ENCODE measurements at regions of chr9 and their contacts with region 1.

Region 1: DNA sequence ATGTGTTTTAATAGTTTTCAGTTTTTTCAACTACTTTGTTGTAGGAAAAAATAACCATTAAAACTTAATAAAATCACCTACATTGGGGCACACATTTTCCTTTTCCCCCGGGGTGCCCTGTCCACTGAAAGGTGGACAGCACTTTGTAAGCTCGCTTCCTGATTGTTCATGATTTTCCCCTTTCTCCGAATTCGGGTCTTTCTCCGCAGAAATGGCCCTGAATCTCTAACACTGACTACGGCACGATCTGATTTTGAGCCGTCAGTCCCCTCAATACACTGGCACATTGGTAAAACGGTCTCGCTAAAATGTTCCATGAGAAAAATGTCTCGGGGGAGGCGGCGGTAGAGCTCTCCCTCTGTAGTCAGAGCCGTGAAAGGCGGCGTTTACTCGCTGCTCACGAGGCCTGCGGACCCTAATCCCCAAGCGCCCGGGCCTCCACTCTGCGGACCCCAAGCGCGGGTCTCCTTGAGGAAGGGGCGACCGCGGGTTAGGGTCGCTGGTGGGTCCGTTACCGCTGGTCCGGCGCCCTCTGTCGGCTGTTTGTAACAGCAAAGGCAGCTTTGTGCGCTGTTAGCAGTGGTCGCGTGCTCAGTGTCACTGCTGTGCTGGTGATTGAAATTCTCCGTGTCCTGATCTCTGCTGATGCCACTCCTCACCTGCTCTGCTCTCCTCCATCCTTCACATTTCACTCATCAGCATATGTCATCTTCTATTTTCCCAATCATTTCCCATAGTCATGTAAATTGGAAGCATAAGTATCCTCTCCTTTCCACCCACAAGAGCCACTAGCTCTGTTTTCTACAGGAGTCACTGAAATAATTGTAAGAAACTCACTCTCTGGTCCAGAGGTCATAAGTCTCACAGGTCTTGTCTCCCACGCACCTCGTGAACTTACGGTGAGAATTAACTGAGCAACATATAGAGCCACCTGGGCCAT is 10.8 kb upstream of the IFNA2 start:
- DNase-seq: peak; percentile 21
- ATAC-seq: peak; percentile 84
- H3K4me3 ChIP-seq: peak overlapping the region; percentile 63 to 67
- H3K27ac ChIP-seq: no peak overlapping the region
- H3K4me1 ChIP-seq: peaks cover 0 to 7% of the 10 kb centered on the region in 2 experiments; a peak in 1 of 4 replicates
- H3K27me3 ChIP-seq: no peaks in the 10 kb centered on the region
- CTCF ChIP-seq: peak; percentile 76 to 94 (median 92)
- POLR2A ChIP-seq: no peak
- RAD21 ChIP-seq: peak; percentile 50

Region 2: GRCh38 chr9:21317956-21318923 is 77.8 kb before region 1 on chr9:
- CTCF ChIA-PET with region 1: interaction called, 12 read pairs
- POLR2A ChIA-PET with region 1: no interaction called
- RAD21 ChIA-PET with region 1: no interaction called
- intact Hi-C with region 1: no loop called
- DNase-seq: no peak
- ATAC-seq: peak; percentile 89
- H3K4me3 ChIP-seq: no peak overlapping the region
- H3K27ac ChIP-seq: no peak overlapping the region
- H3K4me1 ChIP-seq: peaks cover 3 to 10% of the 10 kb centered on the region in 2 experiments; a peak in 3 of 4 replicates
- H3K27me3 ChIP-seq: no peaks in the 10 kb centered on the region
- CTCF ChIP-seq: peak; percentile 54 to 68 (median 63); a peak in 5 of 6 replicates
- POLR2A ChIP-seq: no peak
- RAD21 ChIP-seq: peak; percentile 69

Region 3: DNA sequence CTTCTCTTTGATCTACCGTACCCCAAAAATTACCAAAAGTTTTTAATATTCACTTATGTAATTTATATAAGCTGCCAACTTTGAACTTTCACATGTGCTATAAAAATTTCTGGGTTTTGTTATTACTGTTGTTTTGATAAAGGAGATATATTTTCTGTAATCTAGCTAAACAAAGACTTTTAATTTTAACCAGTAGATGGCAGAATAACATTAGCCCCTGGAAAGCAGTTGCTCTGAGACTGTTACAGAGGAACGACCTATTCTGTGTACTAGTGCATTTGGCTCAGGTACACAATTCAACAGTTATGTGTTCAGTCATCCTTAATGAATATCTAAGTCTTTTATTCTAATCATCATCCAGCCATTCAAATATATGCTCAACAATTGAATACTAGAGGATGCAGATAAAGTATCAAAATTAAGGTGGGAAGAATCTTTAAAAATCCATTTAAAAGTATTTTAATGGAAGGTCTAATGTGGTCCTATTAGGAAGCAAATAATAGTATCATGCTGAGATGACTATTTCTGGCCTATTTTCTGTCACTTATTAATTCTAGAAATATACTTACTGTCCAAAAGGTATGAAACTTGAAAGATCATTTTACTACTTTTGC is 69.4 kb before region 1 on chr9:
- CTCF ChIA-PET with region 1: interaction called, 22 read pairs
- POLR2A ChIA-PET with region 1: no interaction called
- RAD21 ChIA-PET with region 1: interaction called in 1 of 2 experiments, 3 read pairs
- intact Hi-C with region 1: loop called (anchors 2 kb)
- DNase-seq: no peak
- ATAC-seq: peak; percentile 80
- H3K4me3 ChIP-seq: no peak overlapping the region
- H3K27ac ChIP-seq: no peak overlapping the region
- H3K4me1 ChIP-seq: no peaks in the 10 kb centered on the region
- H3K27me3 ChIP-seq: no peaks in the 10 kb centered on the region
- CTCF ChIP-seq: peak; percentile 51 to 81 (median 69); a peak in 5 of 6 replicates
- POLR2A ChIP-seq: no peak
- RAD21 ChIP-seq: peak; percentile 79

Region 4: DNA sequence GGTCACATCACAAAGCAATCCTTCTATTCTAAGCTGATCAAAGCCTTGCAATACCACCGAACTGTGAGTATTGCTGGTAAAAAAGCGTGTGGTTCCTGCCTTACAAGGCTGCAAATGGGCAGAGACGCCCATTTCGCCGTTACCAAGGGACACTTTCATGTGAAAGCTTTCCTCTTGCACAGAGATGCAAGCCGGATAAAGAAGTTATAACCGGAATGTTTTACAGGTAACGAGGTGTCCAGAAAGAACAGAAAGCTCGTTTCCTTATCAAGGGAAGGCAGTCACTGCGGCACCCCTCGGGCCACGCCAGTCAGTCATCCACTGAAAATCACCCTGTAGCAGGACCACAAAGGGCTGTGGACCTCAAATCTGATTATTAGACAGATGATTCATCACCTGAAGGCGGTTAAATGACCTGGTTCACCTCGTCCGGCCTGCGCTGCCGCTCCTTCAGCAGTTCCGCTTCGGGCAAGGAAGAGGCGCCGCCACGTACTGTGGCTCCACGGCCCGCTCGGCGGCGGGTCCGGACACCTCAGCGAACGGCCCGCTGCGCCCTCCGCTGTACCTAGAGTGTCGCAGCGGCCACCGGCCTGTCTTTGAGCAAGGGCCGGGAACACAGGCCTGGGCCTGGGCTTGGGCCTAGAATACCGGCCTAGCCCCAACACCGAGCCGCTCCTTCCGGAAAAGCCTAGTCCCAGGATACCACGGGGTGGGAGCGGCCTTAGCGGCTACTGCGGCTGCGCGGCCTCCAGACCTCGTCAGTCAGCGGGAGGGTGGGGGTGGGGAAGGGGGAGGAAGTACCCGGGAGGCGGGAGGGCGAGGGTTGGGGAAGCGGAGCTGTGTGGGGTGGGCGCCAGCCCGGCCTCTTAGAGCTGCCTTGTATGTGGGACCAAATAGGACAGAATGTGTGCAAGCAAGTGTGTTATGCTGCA is 61.1 kb before region 1 on chr9 and contains the start of gene KLHL9:
- CTCF ChIA-PET with region 1: interaction called, 14 read pairs
- POLR2A ChIA-PET with region 1: no interaction called
- RAD21 ChIA-PET with region 1: no interaction called
- intact Hi-C with region 1: no loop called
- DNase-seq: peak; percentile 83
- ATAC-seq: peak; percentile 96
- H3K4me3 ChIP-seq: peak within 1 kb of the TSS; percentile 85 to 98
- H3K27ac ChIP-seq: peak within 1 kb of the TSS; percentile 82
- H3K4me1 ChIP-seq: peaks cover 3 to 23% of the 10 kb centered on the region in 2 experiments; a peak in 3 of 4 replicates
- H3K27me3 ChIP-seq: no peaks in the 10 kb centered on the region
- CTCF ChIP-seq: no peak
- POLR2A ChIP-seq: peak; percentile 46
- RAD21 ChIP-seq: no peak
- total RNA-seq, gene KLHL9: 16.4 TPM

Region 5: GRCh38 chr9:21381448-21382339 is 14.4 kb before region 1 on chr9:
- CTCF ChIA-PET with region 1: interaction called, 16 read pairs
- POLR2A ChIA-PET with region 1: interaction called, 4 read pairs
- RAD21 ChIA-PET with region 1: no interaction called
- intact Hi-C with region 1: no loop called
- DNase-seq: no peak
- ATAC-seq: no peak
- H3K4me3 ChIP-seq: no peak overlapping the region
- H3K27ac ChIP-seq: no peak overlapping the region
- H3K4me1 ChIP-seq: no peaks in the 10 kb centered on the region
- H3K27me3 ChIP-seq: no peaks in the 10 kb centered on the region
- CTCF ChIP-seq: no peak
- POLR2A ChIP-seq: no peak
- RAD21 ChIP-seq: no peak

Region 6: GRCh38 chr9:21413624-21414023 is 17.6 kb after region 1 on chr9:
- CTCF ChIA-PET with region 1: interaction called, 11 read pairs
- POLR2A ChIA-PET with region 1: no interaction called
- RAD21 ChIA-PET with region 1: no interaction called
- intact Hi-C with region 1: no loop called
- DNase-seq: no peak
- ATAC-seq: peak; percentile 90
- H3K4me3 ChIP-seq: no peak overlapping the region
- H3K27ac ChIP-seq: no peak overlapping the region
- H3K4me1 ChIP-seq: peaks cover 0 to 8% of the 10 kb centered on the region in 2 experiments; a peak in 2 of 4 replicates
- H3K27me3 ChIP-seq: no peaks in the 10 kb centered on the region
- CTCF ChIP-seq: peak; percentile 29 to 62 (median 49); a peak in 5 of 6 replicates
- POLR2A ChIP-seq: no peak
- RAD21 ChIP-seq: peak; percentile 47